GM12878 (cell line): ENCODE measurements at regions of chr14 and their contacts with region 1.

Region 1: GRCh38 chr14:75982266-75983018 is 647 bp upstream of the TGFB3 start:
- DNase-seq: no peak
- ATAC-seq: peak; percentile 81
- H3K4me3 ChIP-seq: peak overlapping the region; percentile 92
- H3K27ac ChIP-seq: 0 out of 2 replicates have a peak overlapping the region, but pooled peaks have one; percentile 47
- H3K4me1 ChIP-seq: peaks cover 24% of the 10 kb centered on the region
- H3K27me3 ChIP-seq: no peaks in the 10 kb centered on the region; a peak in 1 of 4 replicates
- CTCF ChIP-seq: peak; percentile 57 to 79 (median 77)
- EP300 ChIP-seq: no peak
- POLR2A ChIP-seq: no peak
- RAD21 ChIP-seq: peak; percentile 80

Region 2: DNA sequence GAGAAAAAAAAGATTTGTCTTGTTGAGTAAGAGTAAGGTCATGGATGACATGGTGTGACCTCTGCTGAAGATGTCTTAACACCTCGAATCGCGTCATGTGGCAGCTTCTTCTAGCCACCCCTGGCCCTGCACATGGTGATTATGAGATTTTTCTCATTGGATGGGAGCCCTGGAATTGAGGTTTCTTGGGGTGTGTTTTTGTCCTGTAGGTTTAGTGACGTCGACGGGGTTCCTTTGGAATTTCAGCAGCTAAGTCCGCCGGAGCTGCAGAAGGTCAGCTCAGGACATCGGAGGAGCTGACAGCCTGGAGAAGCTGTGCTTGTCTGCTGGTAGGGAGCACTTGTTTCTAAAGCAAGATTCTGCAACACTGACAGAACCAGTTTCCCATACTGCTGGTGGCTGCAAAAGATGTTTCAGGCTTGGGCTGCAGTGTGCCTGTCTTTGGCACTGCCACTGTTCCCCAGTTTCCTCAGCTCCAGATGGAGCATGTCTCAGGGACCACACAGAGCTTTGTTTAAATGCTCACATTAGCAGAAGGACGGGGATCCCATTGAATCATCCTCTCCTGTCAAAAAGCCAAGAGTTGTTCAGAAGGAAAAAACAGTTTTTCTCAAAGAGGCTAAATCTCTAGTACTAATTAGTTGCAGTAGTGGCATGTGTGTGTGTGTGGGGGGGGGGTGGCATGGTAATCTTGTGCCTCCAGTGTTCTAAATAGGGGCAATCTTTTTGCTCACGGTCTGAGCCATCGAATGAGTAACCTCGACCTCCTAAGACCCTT is 709.0 kb before region 1 on chr14:
- CTCF ChIA-PET with region 1: no interaction called
- POLR2A ChIA-PET with region 1: no interaction called
- RAD21 ChIA-PET with region 1: no interaction called
- SMC1A ChIA-PET with region 1: no interaction called
- in situ Hi-C with region 1: no loop called
- intact Hi-C with region 1: no loop called
- DNase-seq: no peak
- ATAC-seq: no peak
- H3K4me3 ChIP-seq: no peak overlapping the region
- H3K27ac ChIP-seq: no peak overlapping the region
- H3K4me1 ChIP-seq: peaks cover 6% of the 10 kb centered on the region
- H3K27me3 ChIP-seq: peaks cover 14 to 24% of the 10 kb centered on the region in 2 experiments
- CTCF ChIP-seq: no peak
- EP300 ChIP-seq: no peak
- POLR2A ChIP-seq: no peak
- RAD21 ChIP-seq: no peak

Region 3: GRCh38 chr14:75654127-75654732 is 328.2 kb before region 1 on chr14:
- CTCF ChIA-PET with region 1: interaction called, 20 read pairs
- POLR2A ChIA-PET with region 1: no interaction called
- RAD21 ChIA-PET with region 1: interaction called, 4 read pairs
- SMC1A ChIA-PET with region 1: interaction called, 4 read pairs
- in situ Hi-C with region 1: no loop called
- intact Hi-C with region 1: no loop called
- DNase-seq: peak; percentile 38
- ATAC-seq: peak; percentile 98
- H3K4me3 ChIP-seq: no peak overlapping the region
- H3K27ac ChIP-seq: no peak overlapping the region
- H3K4me1 ChIP-seq: no peaks in the 10 kb centered on the region
- H3K27me3 ChIP-seq: no peaks in the 10 kb centered on the region
- CTCF ChIP-seq: peak; percentile 97 to 98 (median 97)
- EP300 ChIP-seq: no peak
- POLR2A ChIP-seq: no peak
- RAD21 ChIP-seq: peak; percentile 97

Region 4: DNA sequence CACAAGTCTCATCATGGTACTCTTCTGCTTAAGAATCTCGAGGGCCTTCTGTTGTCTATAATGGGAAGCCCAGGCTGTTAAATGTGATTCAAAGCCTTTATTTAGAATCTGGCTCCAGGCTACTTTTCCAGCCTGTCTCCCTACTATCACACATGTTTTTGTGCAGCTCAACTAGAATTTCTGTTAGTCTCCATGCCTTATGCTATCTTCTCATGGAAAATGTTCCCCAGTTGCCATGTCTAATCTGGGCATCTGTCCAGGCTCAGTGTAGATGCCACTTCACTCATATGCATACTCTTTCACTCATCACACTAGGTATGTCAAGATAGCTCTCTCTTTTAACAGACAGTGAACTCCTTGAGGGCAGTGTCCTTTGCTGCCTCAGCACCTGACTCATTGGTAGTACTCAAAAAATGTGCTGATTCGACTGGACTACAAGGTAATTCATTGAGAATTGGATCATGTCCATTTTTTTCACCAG is 176.1 kb before region 1 on chr14:
- CTCF ChIA-PET with region 1: interaction called, 4 read pairs
- POLR2A ChIA-PET with region 1: no interaction called
- RAD21 ChIA-PET with region 1: no interaction called
- SMC1A ChIA-PET with region 1: interaction called, 3 read pairs
- in situ Hi-C with region 1: no loop called
- intact Hi-C with region 1: loop called (anchors 5 kb)
- DNase-seq: no peak
- ATAC-seq: no peak
- H3K4me3 ChIP-seq: no peak overlapping the region
- H3K27ac ChIP-seq: no peak overlapping the region
- H3K4me1 ChIP-seq: no peaks in the 10 kb centered on the region
- H3K27me3 ChIP-seq: no peaks in the 10 kb centered on the region
- CTCF ChIP-seq: no peak
- EP300 ChIP-seq: no peak
- POLR2A ChIP-seq: no peak
- RAD21 ChIP-seq: no peak

Region 5: GRCh38 chr14:75915061-75915460 is 67.4 kb before region 1 on chr14:
- CTCF ChIA-PET with region 1: interaction called, 390 read pairs
- POLR2A ChIA-PET with region 1: no interaction called
- RAD21 ChIA-PET with region 1: interaction called, 3 read pairs
- SMC1A ChIA-PET with region 1: interaction called, 190 read pairs
- in situ Hi-C with region 1: no loop called
- intact Hi-C with region 1: no loop called
- DNase-seq: no peak
- ATAC-seq: no peak
- H3K4me3 ChIP-seq: no peak overlapping the region
- H3K27ac ChIP-seq: no peak overlapping the region
- H3K4me1 ChIP-seq: peaks cover 9% of the 10 kb centered on the region
- H3K27me3 ChIP-seq: no peaks in the 10 kb centered on the region
- CTCF ChIP-seq: no peak
- EP300 ChIP-seq: no peak
- POLR2A ChIP-seq: no peak
- RAD21 ChIP-seq: no peak

Region 6: GRCh38 chr14:75968456-75968855 is 14.0 kb before region 1 on chr14:
- CTCF ChIA-PET with region 1: interaction called, 10 read pairs
- POLR2A ChIA-PET with region 1: no interaction called
- RAD21 ChIA-PET with region 1: interaction called, 8 read pairs
- SMC1A ChIA-PET with region 1: interaction called, 5 read pairs
- in situ Hi-C with region 1: no loop called
- intact Hi-C with region 1: no loop called
- DNase-seq: no peak
- ATAC-seq: no peak
- H3K4me3 ChIP-seq: no peak overlapping the region
- H3K27ac ChIP-seq: no peak overlapping the region
- H3K4me1 ChIP-seq: peaks cover 6% of the 10 kb centered on the region; the same call in 1 of the 2 replicates
- H3K27me3 ChIP-seq: no peaks in the 10 kb centered on the region
- CTCF ChIP-seq: no peak
- EP300 ChIP-seq: no peak
- POLR2A ChIP-seq: no peak
- RAD21 ChIP-seq: no peak